Activated CD4-positive, alpha-beta T cell treated with anti-CD3 and anti-CD28 coated beads, Interleukin-2, amount 10 ng/mL, durations not matched to agents 24 days and 14 days (primary cell): ENCODE measurements at regions of chr6 and their contacts with region 1.

Region 1: GRCh38 chr6:90080876-90081481 is 186.7 kb downstream of the GJA10 start:
- DNase-seq: peak; percentile 94
- H3K4me3 Mint-ChIP-seq: peak overlapping the region; percentile 87
- H3K27ac Mint-ChIP-seq: peak overlapping the region; percentile 94
- H3K4me1 Mint-ChIP-seq: peaks cover 77% of the 10 kb centered on the region
- H3K27me3 Mint-ChIP-seq: no peaks in the 10 kb centered on the region

Region 2: DNA sequence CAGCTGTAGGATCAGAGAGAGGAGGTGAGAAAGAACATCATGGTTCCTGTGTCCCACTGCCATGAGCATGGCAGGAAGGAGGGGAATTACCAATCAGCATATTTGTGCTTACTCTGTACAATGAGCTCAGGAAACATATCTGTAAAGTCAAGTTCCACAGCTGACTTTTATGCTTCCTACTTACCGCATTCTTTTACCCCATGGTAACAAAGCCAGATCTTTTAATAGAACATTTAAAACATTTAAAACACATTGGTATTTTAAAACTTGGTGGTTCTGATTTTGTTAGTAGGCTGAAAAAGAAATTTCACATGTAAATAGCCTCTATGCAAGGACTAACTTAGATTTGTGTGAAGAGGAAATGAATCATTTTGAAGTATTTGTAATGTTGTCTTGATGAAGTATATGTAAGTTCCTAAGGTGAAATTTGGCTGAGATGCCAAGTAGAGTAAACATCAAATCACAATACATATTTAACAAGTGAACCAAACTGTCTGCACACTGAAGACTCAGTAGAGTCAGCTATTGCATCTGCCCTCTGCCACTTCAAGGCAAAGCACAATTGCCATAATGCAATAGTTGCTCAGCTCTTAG is 72.0 kb before region 1 on chr6:
- intact Hi-C with region 1: loop called (anchors 2 kb)
- DNase-seq: peak; percentile 54
- H3K4me3 Mint-ChIP-seq: peak overlapping the region; percentile 40
- H3K27ac Mint-ChIP-seq: peak overlapping the region; percentile 85
- H3K4me1 Mint-ChIP-seq: peaks cover 33% of the 10 kb centered on the region
- H3K27me3 Mint-ChIP-seq: no peaks in the 10 kb centered on the region

Region 3: GRCh38 chr6:90103056-90103800 is 22.2 kb after region 1 on chr6:
- intact Hi-C with region 1: loop called (anchors 1 kb)
- DNase-seq: peak; percentile 73
- H3K4me3 Mint-ChIP-seq: peak overlapping the region; percentile 64
- H3K27ac Mint-ChIP-seq: peak overlapping the region; percentile 88
- H3K4me1 Mint-ChIP-seq: peaks cover 60% of the 10 kb centered on the region
- H3K27me3 Mint-ChIP-seq: no peaks in the 10 kb centered on the region

Region 4: GRCh38 chr6:90216072-90216977 is 135.3 kb after region 1 on chr6:
- intact Hi-C with region 1: loop called (anchors 1 kb)
- DNase-seq: peak; percentile 79
- H3K4me3 Mint-ChIP-seq: peak overlapping the region; percentile 48
- H3K27ac Mint-ChIP-seq: no peak overlapping the region
- H3K4me1 Mint-ChIP-seq: peaks cover 40% of the 10 kb centered on the region
- H3K27me3 Mint-ChIP-seq: no peaks in the 10 kb centered on the region

Region 5: GRCh38 chr6:90285611-90286381 is 204.8 kb after region 1 on chr6:
- intact Hi-C with region 1: loop called (anchors 1 kb)
- DNase-seq: peak; percentile 87
- H3K4me3 Mint-ChIP-seq: peak overlapping the region; percentile 87
- H3K27ac Mint-ChIP-seq: peak overlapping the region; percentile 94
- H3K4me1 Mint-ChIP-seq: peaks cover 81% of the 10 kb centered on the region
- H3K27me3 Mint-ChIP-seq: no peaks in the 10 kb centered on the region

Region 6: DNA sequence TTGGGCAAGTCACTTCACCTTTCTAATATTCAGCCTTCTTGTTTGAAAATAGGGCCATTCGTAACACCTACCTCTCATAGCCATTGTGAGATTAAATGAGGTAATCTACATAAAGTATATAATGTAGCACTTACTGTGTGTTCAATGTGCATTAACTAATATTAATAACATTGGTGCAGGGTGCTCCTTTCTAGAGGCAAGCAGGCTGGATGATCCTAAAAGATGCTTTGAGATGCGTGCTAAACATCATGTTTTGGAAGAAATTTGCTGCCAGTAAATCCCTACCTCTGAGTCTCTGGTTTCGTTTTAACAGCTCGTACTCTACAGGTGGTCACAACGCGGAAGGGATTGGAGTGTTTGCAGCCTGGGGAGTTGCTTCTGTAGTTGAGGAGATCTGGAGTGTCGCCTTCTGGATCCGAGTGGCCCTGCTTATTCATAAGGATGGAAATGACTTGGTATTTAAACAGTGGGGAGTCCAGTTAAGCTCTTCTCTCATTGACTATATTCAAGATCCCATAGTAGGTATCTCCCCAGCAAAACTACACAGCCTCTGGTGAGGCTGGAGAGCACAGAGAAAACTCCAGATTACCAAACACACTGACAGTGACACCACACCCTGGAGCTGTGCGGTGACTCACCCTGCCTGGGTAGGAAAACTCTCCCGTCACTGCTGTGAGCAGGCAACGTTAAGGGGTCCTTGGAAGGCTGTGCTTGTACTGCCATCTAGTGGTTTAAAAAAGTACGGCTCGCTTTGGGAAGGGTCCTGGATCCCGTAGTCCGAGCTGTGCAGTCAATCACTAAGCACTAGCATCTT is 398.0 kb after region 1 on chr6:
- intact Hi-C with region 1: loop called (anchors 1 kb)
- DNase-seq: peak; percentile 95
- H3K4me3 Mint-ChIP-seq: peak overlapping the region; percentile 48
- H3K27ac Mint-ChIP-seq: peak overlapping the region; percentile 71
- H3K4me1 Mint-ChIP-seq: peaks cover 51% of the 10 kb centered on the region
- H3K27me3 Mint-ChIP-seq: no peaks in the 10 kb centered on the region